ENCODE measurements at regions of chr1 and their contacts with region 1.

Region 1: DNA sequence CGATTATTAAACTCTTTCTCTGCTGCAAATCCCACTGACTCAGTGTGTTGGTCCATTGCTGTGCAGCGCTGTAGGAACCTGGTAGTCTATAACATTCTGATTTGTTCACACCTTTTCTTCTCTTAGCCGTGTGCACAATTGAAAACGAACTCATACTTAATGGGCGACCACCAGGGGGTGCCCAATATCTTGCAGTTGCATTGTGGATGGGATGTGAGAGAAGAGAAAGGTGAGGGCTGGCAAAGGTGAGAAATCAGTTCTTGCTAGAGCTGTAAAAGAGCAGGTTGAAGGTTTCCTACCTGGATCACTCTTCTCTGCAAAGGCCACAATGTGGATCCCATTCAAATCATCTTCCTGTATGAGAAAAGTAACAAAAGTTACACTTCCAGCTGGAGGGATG is 51.0 kb downstream of the CASQ2 start:
- DNase-seq: peak; percentile 37 to 61 (median 58)
- H3K4me3 ChIP-seq: no peak overlapping the region
- H3K27ac ChIP-seq: no peak overlapping the region
- H3K4me1 ChIP-seq: no peaks in the 10 kb centered on the region
- H3K27me3 ChIP-seq: no peaks in the 10 kb centered on the region

Region 2: GRCh38 chr1:115757326-115757725 is 39.8 kb after region 1 on chr1:
- CTCF ChIA-PET with region 1: no interaction called
- POLR2A ChIA-PET with region 1: no interaction called
- DNase-seq: no peak
- H3K4me3 ChIP-seq: no peak overlapping the region
- H3K27ac ChIP-seq: no peak overlapping the region
- H3K4me1 ChIP-seq: no peaks in the 10 kb centered on the region
- H3K27me3 ChIP-seq: peaks cover 0 to 4% (median 0%) of the 10 kb centered on the region in 5 experiments

Region 3: DNA sequence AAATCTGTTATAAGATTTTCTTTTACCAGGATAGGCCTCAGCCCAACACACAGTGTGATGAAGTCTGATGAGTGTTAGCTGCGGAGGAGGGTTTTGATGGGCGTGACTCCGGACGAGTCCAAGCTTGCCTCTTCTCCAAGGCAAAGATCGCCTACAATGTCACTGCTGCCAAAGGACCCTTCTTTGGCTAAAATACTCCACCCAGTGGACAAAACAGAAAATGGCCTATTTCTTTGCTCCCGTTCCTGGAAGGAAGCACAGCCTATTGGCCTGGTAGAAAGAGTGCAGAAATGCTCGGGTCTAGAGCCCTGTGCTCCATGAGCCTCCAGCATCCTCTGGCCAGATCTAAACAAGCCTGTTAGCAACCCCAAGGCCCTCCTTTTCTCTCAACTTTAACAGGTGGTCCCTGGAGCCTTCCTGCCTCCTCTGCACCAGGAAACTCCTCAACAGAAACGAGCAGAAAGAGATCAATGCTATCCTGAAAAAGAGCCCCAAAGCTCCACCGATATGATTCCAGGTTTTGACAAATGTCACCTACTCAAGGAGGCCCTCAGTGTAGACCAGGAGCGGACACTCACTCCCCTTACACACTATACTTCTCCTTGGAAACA is 54.4 kb after region 1 on chr1:
- CTCF ChIA-PET with region 1: interaction called, 12 read pairs
- POLR2A ChIA-PET with region 1: no interaction called
- DNase-seq: peak; percentile 67 to 79 (median 75)
- H3K4me3 ChIP-seq: peak overlapping the region in 3 of 7 experiments; percentile 44 to 65 (median 48)
- H3K27ac ChIP-seq: no peak overlapping the region
- H3K4me1 ChIP-seq: peaks cover 0 to 3% (median 0%) of the 10 kb centered on the region in 4 experiments
- H3K27me3 ChIP-seq: peaks cover 0 to 4% (median 0%) of the 10 kb centered on the region in 5 experiments